Psoas muscle (tissue), 8 donors: ENCODE measurements at regions of chr16 and their contacts with region 1.

Region 1: DNA sequence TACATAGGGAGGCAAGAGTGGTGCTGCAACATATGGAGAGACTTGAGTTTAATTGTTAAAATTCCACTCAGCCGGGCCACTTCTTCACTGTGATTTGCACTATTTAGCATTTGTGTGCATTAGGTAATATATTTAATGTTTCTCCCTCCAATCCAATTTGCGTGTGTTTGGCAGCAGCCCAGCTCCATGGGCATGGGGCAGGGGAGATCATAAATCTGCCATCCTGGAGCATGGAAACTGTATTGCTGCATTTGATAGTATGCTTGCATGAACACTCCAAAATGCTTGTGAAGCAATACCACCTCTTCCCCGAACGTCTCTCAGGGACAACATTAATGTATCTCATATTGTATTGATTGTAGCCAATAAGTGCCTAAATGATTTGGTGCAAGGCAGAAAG is 339.1 kb upstream of the RBFOX1 start:
- DNase-seq: no peak
- ATAC-seq: no peak
- H3K4me3 ChIP-seq: no peak overlapping the region
- H3K27ac ChIP-seq: no peak overlapping the region
- H3K4me1 ChIP-seq: no peaks in the 10 kb centered on the region
- H3K27me3 ChIP-seq: no peaks in the 10 kb centered on the region
- CTCF ChIP-seq: no peak

Region 2: DNA sequence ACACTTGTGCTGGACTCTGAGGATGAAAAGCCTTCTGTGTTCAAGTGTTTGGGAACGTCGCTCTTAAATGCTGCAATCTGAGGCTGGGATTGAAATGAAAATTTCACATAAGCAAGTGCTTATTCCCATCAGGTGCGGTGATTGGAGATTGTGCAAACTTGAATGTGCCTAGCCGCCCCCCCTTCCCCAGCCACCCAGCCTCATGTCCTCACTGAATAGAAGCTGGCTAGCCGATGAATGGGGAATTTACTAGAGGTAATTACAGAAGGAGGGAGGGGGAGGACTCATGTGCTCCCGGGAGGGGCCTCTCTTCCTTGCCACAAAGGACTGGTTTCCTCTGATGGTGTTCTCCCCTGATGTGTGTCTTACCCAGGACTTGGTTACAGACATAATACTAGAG is 1351.1 kb before region 1 on chr16:
- intact Hi-C with region 1: no loop called
- DNase-seq: no peak
- ATAC-seq: no peak
- H3K4me3 ChIP-seq: no peak overlapping the region
- H3K27ac ChIP-seq: no peak overlapping the region
- H3K4me1 ChIP-seq: no peaks in the 10 kb centered on the region
- H3K27me3 ChIP-seq: no peaks in the 10 kb centered on the region
- CTCF ChIP-seq: no peak

Region 3: GRCh38 chr16:6932871-6933390 is 60.6 kb before region 1 on chr16:
- intact Hi-C with region 1: loop called in 1 of 2 experiments (anchors 10 kb)
- DNase-seq: no peak
- ATAC-seq: no peak
- H3K4me3 ChIP-seq: no peak overlapping the region
- H3K27ac ChIP-seq: no peak overlapping the region
- H3K4me1 ChIP-seq: no peaks in the 10 kb centered on the region
- H3K27me3 ChIP-seq: no peaks in the 10 kb centered on the region
- CTCF ChIP-seq: no peak

Region 4: GRCh38 chr16:7026639-7027038 is 33.1 kb after region 1 on chr16:
- intact Hi-C with region 1: no loop called
- DNase-seq: no peak
- ATAC-seq: no peak
- H3K4me3 ChIP-seq: no peak overlapping the region
- H3K27ac ChIP-seq: no peak overlapping the region
- H3K4me1 ChIP-seq: no peaks in the 10 kb centered on the region
- H3K27me3 ChIP-seq: no peaks in the 10 kb centered on the region
- CTCF ChIP-seq: no peak

Region 5: GRCh38 chr16:7055443-7055842 is 61.9 kb after region 1 on chr16:
- intact Hi-C with region 1: no loop called
- DNase-seq: no peak
- ATAC-seq: no peak
- H3K4me3 ChIP-seq: no peak overlapping the region
- H3K27ac ChIP-seq: no peak overlapping the region
- H3K4me1 ChIP-seq: no peaks in the 10 kb centered on the region
- H3K27me3 ChIP-seq: peaks cover 0 to 3% (median 0%) of the 10 kb centered on the region in 3 donors
- CTCF ChIP-seq: no peak